ENCODE measurements at regions of chr17 and their contacts with region 1.

Region 1: GRCh38 chr17:41824086-41824485 is 11.3 kb downstream of the FKBP10 start:
- DNase-seq: no peak
- H3K4me3 ChIP-seq: no peak overlapping the region
- H3K27ac ChIP-seq: no peak overlapping the region
- H3K4me1 ChIP-seq: no peaks in the 10 kb centered on the region
- H3K27me3 ChIP-seq: no peaks in the 10 kb centered on the region
- CTCF ChIP-seq: no peak

Region 2: GRCh38 chr17:41894791-41895331 is 70.8 kb after region 1 on chr17:
- CTCF ChIA-PET with region 1: no interaction called
- POLR2A ChIA-PET with region 1: interaction called, 10 read pairs
- intact Hi-C with region 1: no loop called
- DNase-seq: peak; percentile 10 to 65
- H3K4me3 ChIP-seq: no peak overlapping the region
- H3K27ac ChIP-seq: no peak overlapping the region; the same call in 1 of the 2 replicates
- H3K4me1 ChIP-seq: no peaks in the 10 kb centered on the region
- H3K27me3 ChIP-seq: no peaks in the 10 kb centered on the region
- CTCF ChIP-seq: no peak